Mucosa of descending colon (tissue), 3 donors: ENCODE measurements at regions of chr2 and their contacts with region 1.

Region 1: GRCh38 chr2:48727565-48727964 is 28.0 kb downstream of the LHCGR start:
- DNase-seq: no peak
- ATAC-seq: peak; percentile 25
- H3K4me3 ChIP-seq: no peak overlapping the region
- H3K4me1 ChIP-seq: no peaks in the 10 kb centered on the region
- CTCF ChIP-seq: no peak

Region 2: DNA sequence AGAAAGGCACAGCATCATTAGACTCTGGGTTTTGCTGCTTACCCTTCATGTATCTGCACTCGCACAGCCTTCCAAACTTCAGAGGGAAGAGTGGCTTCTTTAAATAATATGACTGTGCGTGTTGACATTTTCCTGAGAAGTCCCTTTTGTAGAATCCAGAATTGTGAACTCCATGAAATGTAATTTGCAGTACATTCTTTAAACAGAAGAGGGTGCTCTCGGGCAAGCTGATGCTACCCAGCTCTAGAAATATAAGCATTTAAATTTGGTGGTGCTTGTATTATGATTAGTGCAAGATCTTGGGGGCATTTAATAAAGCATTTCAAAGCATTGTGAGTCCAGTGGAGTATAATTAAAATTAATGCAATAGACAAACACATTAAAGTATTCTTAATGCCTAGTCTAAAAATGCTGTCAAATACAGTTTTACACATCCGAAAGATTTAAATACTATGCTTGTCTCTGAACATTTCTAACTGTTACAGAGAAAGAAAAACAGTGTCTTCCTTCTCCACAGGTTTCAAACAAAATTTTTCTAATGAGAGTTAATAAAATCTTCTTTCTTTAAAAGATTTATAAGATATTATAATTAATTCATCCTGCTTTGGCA is 127.3 kb before region 1 on chr2:
- intact Hi-C with region 1: loop called in 1 of 2 experiments (anchors 10 kb)
- DNase-seq: peak in 1 of 3 donors; percentile 19
- ATAC-seq: no peak
- H3K4me3 ChIP-seq: no peak overlapping the region
- H3K4me1 ChIP-seq: no peaks in the 10 kb centered on the region
- CTCF ChIP-seq: no peak

Region 3: DNA sequence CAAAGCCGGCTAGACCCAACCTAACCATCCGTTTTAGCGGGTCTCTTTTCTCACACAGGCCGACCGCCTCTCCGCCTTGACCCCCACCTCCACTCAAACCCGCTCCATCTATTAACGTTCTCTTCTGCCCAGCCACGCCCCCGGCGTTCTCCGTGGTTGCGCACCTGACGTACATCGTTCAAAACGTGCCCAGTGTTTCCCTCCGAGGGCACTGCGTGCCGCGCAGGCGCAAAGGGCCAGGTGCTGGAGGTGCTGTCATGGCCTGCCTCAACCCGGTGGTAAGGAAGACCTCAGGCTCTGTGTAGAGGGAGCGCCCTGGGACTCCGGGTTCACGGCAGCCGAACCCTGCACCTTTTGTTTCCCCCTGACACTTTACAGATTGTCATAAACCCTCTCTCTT is 109.9 kb before region 1 on chr2 and contains the start of gene GTF2A1L:
- intact Hi-C with region 1: no loop called
- DNase-seq: no peak
- ATAC-seq: no peak
- H3K4me3 ChIP-seq: no peak within 1 kb of the TSS
- H3K4me1 ChIP-seq: no peaks in the 10 kb centered on the region
- CTCF ChIP-seq: no peak
- total RNA-seq, gene GTF2A1L: 0.77 to 8.6 TPM in 2 of 3 donors, not detected in the other

Region 4: GRCh38 chr2:48651153-48651790 is 76.3 kb before region 1 on chr2:
- intact Hi-C with region 1: no loop called
- DNase-seq: no peak
- ATAC-seq: no peak
- H3K4me3 ChIP-seq: no peak overlapping the region
- H3K4me1 ChIP-seq: no peaks in the 10 kb centered on the region
- CTCF ChIP-seq: no peak